ENCODE measurements at regions of chr13 and their contacts with region 1.

Region 1: DNA sequence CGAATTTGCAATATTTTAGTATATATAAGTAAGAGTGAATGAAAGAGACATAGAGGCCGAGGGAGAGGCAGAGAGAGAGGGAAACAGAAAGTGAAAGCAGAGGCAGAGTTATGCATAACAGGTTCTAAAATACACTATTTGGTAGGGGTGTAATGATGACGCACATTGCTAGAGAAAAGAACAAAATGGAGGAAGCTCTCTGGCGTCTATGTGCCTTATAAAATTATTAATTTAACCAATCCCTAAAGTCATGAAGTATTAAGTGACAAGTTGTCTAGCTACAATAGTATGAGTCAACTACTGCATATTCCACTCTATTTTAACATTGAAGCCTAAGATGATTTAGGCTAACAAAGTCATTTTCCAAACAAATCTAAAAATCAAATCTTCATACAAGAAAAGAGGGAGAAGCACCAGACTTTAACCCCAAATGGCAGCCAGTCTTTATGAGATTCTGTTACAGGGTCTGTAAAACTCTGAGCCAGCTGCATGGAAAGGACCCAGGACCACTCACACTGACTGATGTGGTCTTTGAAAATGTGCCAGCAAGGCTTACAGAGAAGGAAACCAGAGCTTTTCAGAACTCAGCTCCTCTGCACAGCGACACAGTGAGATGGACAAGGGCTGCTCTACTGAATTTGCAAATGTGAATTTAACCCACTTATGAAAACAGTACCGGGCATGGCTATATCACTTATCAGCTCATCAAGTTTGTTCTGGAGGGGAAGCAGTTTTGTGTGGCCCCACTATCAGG is 99.0 kb upstream of the SERP2 start:
- DNase-seq: no peak
- H3K4me3 ChIP-seq: peak overlapping the region in 2 of 8 donors; percentile 14 to 48
- H3K27ac ChIP-seq: peak overlapping the region; percentile 61 to 80 (median 75)
- H3K4me1 ChIP-seq: peaks cover 0 to 38% (median 20%) of the 10 kb centered on the region in 6 donors
- H3K27me3 ChIP-seq: no peaks in the 10 kb centered on the region
- CTCF ChIP-seq: no peak
- POLR2A ChIP-seq: no peak

Region 2: DNA sequence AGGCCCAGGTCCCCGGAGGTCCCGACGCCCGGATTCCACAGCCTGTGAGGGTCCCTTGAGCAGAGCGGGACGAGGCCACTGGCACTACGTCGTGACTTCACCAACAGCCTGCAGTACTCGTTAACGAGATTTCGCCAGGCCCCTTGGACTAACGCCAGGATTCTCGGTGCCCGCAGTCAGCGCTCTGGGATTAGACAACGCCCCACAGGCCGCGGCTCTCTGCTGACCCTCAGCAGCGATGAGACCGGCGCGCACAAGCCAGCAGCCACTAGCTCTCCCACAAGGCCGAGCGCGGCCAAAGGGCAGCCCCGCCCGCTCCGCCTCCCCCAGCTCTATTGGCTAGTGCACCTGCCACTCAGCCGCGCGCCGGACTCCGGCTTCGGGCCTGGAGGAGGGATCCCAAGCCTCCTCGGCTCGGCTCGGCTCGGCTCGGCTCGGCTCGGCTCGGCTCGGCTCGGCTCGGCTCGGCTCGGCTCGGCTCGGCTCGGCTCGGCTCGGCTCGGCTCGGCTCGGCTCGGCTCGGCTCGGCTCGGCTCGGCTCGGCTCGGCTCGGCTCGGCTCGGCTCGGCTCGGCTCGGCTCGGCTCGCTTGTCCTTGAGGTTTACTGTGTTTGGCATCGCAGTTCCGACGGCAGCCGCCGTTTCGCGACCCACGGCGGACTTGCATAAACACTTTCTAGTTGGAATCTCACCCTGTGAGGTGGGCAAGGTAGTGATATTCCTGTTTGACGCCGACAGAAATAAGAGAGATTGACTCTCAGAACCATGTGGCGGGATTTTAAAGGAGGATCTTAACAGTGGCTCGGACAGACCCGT is 132.7 kb before region 1 on chr13:
- intact Hi-C with region 1: loop called (anchors 10 kb)
- DNase-seq: peak; percentile 100
- H3K4me3 ChIP-seq: peak overlapping the region; percentile 34 to 76 (median 44)
- H3K27ac ChIP-seq: peak overlapping the region; percentile 88 to 94 (median 91)
- H3K4me1 ChIP-seq: peaks cover 0 to 20% (median 13%) of the 10 kb centered on the region in 6 donors
- H3K27me3 ChIP-seq: no peaks in the 10 kb centered on the region
- CTCF ChIP-seq: peak in 9 of 11 experiments; percentile 11 to 52 (median 43)
- POLR2A ChIP-seq: peak; percentile 29 to 59 (median 52)

Region 3: DNA sequence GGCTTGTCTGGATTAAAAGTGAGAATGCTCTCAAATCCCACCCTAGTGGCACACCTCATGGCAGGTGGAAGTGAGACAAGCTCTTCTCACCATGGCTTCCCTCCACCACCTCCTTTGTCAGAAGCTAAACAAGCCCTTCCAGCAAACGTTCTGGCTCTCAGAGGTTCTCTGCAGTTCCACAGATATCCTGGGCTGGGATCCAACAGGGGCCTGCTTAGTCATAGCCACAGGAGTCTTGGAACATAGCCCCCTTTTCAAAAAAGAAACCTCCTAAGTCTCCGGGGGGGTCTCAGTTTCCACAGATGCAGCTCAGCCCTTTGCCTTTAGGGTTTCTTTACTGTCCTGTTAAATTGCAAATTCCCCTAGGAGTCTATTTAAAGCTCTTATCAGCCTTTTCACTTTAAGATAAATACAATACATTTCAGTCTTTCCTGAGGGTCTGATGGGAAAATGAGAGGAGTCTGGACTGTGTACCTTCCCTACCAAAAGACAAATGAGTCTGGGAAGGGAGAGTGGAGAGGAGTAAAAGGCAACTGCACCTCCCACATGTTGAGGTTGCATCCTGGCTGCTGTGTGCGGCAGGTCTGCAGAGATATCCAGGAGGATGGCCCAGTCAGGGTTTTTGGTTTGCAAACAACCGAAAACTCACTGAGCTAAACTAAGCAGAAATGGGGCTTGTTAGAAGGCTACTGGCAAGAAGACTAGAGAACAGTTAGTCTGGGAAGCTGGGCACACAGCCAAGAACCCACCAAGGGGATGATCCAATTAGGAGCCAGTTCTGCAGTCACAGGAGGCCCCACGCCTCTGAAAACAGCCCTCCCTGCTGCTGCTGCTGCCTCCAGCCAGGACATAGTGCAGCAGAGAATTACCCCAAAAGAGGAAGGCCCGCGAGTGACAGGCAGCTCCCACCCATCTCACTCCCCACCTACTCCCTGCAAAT is 57.6 kb after region 1 on chr13:
- intact Hi-C with region 1: no loop called
- DNase-seq: no peak
- H3K4me3 ChIP-seq: no peak overlapping the region
- H3K27ac ChIP-seq: no peak overlapping the region
- H3K4me1 ChIP-seq: no peaks in the 10 kb centered on the region
- H3K27me3 ChIP-seq: no peaks in the 10 kb centered on the region
- CTCF ChIP-seq: no peak
- POLR2A ChIP-seq: no peak

Region 4: GRCh38 chr13:44739120-44739519 is 464.5 kb after region 1 on chr13:
- intact Hi-C with region 1: no loop called
- DNase-seq: no peak
- H3K4me3 ChIP-seq: no peak overlapping the region
- H3K27ac ChIP-seq: peak overlapping the region in 3 of 8 donors; percentile 28 to 64 (median 42)
- H3K4me1 ChIP-seq: no peaks in the 10 kb centered on the region
- H3K27me3 ChIP-seq: no peaks in the 10 kb centered on the region
- CTCF ChIP-seq: no peak
- POLR2A ChIP-seq: no peak

Region 5: GRCh38 chr13:45219938-45220375 is 945.3 kb after region 1 on chr13:
- intact Hi-C with region 1: no loop called
- DNase-seq: no peak
- H3K4me3 ChIP-seq: peak overlapping the region in 2 of 8 donors; percentile 21 to 26
- H3K27ac ChIP-seq: peak overlapping the region in 6 of 8 donors; percentile 6 to 68 (median 52)
- H3K4me1 ChIP-seq: peaks cover 0 to 10% (median 0%) of the 10 kb centered on the region in 6 donors
- H3K27me3 ChIP-seq: no peaks in the 10 kb centered on the region
- CTCF ChIP-seq: no peak
- POLR2A ChIP-seq: no peak